ENCODE measurements at regions of chrX and their contacts with region 1.

Region 1: GRCh38 chrX:33252306-33252825 is 41.0 kb upstream of the DMD start:
- DNase-seq: no peak
- ATAC-seq: no peak
- H3K4me3 Mint-ChIP-seq: no peak overlapping the region
- H3K27ac Mint-ChIP-seq: no peak overlapping the region
- H3K4me1 Mint-ChIP-seq: no peaks in the 10 kb centered on the region
- H3K27me3 Mint-ChIP-seq: no peaks in the 10 kb centered on the region

Region 2: GRCh38 chrX:33183361-33183760 is 69.0 kb before region 1 on chrX:
- CTCF ChIA-PET with region 1: no interaction called
- POLR2A ChIA-PET with region 1: no interaction called
- intact Hi-C with region 1: loop called in 1 of 2 experiments (anchors 10 kb)
- DNase-seq: no peak
- ATAC-seq: no peak
- H3K4me3 Mint-ChIP-seq: no peak overlapping the region
- H3K27ac Mint-ChIP-seq: no peak overlapping the region
- H3K4me1 Mint-ChIP-seq: no peaks in the 10 kb centered on the region
- H3K27me3 Mint-ChIP-seq: no peaks in the 10 kb centered on the region

Measured in activated CD4-positive, alpha-beta T cell treated with anti-CD3 and anti-CD28 coated beads for 36 hours (primary cell).